Activated naive CD8-positive, alpha-beta T cell treated with anti-CD3 and anti-CD28 coated beads, Interleukin-2, amount 10 ng/mL, durations not matched to agents 7 days and 5 days (primary cell): ENCODE measurements at regions of chr2 and their contacts with region 1.

Region 1: DNA sequence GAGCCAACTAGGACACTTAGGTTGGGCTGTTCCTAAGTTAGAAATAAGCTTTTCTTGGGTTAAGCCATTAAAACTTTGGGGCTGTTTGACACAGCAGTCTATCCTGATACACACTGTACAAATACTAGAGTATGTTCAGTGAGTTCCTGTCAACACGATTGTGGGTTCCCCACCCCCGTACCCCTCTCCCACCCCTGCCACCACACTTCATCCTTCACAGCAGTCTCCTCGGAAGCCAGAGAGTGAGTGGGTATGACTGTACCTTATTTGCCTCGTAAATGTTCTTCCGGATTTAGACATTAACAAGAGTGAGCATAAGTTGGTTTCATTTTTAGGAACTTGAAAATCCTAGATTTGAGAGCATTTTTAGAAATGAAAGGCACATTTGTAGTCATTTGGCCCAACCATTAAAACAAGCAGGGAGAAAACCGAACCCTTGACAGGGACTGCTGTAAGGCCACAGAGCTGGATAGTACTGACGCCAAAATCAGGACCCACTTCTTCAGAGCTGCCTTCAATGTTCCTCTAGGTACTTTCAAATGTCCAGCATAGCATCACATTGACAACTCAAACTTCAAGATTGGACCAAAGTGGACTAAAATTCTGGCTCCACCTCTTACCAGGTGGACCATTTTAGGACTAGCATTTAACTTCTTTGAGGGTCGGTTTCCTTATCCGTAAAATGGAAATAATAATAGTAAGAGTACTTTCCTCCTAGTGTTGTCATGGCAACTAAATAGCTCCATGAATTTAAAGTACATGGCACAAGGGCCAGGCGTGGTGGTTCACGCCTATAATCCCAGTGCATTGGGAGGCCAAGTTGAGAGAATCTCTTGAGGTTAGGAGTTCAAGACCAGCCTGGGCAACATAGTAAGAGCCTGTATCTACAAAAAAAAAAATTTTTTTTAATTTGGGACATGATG is 166.3 kb upstream of the SERTAD2 start:
- DNase-seq: peak; percentile 37
- ATAC-seq: peak; percentile 96
- H3K4me3 Mint-ChIP-seq: peak overlapping the region; percentile 63
- H3K27ac Mint-ChIP-seq: peak overlapping the region; percentile 88
- H3K4me1 Mint-ChIP-seq: peaks cover 28% of the 10 kb centered on the region
- H3K27me3 Mint-ChIP-seq: no peaks in the 10 kb centered on the region

Region 2: DNA sequence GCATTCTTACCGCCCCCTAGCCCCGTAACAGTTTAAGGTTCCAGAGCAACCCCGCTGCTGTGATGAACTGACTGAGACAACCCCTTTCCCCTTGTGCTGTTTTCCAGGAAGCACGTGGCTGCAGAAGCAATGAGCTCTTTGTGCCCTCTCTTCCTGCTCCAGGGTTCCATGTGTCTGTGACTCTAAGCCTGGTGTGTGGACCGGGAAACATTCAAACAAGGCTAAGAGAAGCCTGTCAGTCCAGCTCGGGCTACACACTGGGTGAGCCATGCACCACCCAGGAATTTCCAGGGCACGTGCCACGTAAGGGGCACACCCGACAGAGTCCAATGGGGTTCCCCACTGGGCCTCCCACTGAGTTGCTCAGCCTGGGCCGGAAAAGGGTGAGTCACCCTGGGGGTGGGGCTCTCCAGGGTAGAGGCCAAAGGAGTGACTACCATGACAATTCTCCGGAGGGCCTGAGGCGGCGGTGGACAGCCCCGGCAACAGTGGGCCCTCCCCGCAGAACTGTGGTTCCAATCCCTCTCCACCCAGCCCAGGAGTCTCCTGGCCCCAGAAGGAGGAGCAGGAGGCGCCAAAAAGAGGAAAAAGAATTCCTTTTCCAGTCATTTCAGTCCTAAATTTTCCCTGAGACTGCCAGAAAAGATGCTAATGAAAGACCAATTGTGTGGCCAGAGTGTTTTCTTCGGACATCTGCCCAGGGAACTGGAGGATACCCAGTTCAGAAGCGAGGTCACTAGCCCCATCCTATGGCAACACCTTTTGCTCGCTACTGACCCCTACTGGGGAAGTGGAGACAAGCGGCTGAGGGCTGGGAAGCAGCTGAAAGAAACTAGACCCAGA is 11.3 kb after region 1 on chr2:
- POLR2A ChIA-PET with region 1: interaction called, 11 read pairs
- DNase-seq: peak; percentile 80
- ATAC-seq: peak; percentile 86
- H3K4me3 Mint-ChIP-seq: peak overlapping the region; percentile 6
- H3K27ac Mint-ChIP-seq: peak overlapping the region; percentile 28
- H3K4me1 Mint-ChIP-seq: peaks cover 18% of the 10 kb centered on the region
- H3K27me3 Mint-ChIP-seq: peaks cover 11% of the 10 kb centered on the region